ENCODE measurements at regions of chr12 and their contacts with region 1.

Region 1: DNA sequence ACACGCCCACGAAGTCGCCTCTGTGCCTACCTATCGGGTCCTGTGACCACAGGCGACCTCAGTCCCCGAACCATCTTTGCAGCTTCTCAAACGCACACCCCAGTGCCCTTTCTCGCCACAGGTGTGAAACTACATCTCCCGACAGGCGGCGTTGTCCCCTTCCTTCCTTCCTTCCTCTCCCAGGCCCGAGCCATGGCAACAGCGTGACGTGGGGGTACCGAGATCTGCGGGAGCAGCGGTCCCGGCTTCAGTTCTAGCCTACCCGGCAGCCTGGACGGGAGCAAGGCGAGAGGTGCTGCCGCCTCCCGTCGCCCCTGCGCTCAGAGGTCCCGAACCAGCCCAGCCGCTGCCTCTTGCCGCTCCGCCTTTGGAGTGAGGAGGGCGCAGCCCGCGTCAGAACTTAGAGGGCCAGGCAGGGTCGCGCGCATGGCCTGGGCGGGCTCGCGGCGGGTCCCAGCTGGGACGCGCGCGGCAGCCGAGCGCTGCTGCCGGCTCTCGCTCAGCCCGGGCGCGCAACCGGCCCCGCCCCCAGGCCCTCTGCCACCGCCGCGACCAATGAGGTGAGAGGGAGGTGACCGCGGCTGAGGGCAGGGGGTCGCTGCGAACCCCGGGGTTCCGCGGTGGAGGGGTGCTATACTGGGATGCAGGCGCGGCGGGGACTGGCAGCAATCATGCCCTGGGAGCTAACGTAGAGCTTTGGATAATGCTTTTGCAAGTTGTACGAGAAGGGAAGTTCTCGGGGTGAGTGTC is at the start of gene COQ10A:
- DNase-seq: peak; percentile 79
- H3K4me3 ChIP-seq: peak within 1 kb of the TSS; percentile 43 to 95 (median 74)
- H3K27ac ChIP-seq: peak within 1 kb of the TSS; percentile 38
- H3K4me1 ChIP-seq: peaks cover 17% of the 10 kb centered on the region
- H3K27me3 ChIP-seq: no peaks in the 10 kb centered on the region
- CTCF ChIP-seq: peak; percentile 54 to 81
- total RNA-seq, gene COQ10A: 3.7 to 4.2 TPM

Region 2: GRCh38 chr12:56143870-56144269 is 123.0 kb before region 1 on chr12:
- CTCF ChIA-PET with region 1: no interaction called
- dilution Hi-C with region 1: no loop called
- in situ Hi-C with region 1: no loop called
- intact Hi-C with region 1: no loop called
- DNase-seq: no peak
- H3K4me3 ChIP-seq: no peak overlapping the region
- H3K27ac ChIP-seq: no peak overlapping the region
- H3K4me1 ChIP-seq: peaks cover 9% of the 10 kb centered on the region
- H3K27me3 ChIP-seq: no peaks in the 10 kb centered on the region
- CTCF ChIP-seq: no peak

Region 3: GRCh38 chr12:56172831-56173230 is 94.0 kb before region 1 on chr12:
- CTCF ChIA-PET with region 1: no interaction called
- dilution Hi-C with region 1: no loop called
- in situ Hi-C with region 1: no loop called
- intact Hi-C with region 1: no loop called
- DNase-seq: no peak
- H3K4me3 ChIP-seq: no peak overlapping the region
- H3K27ac ChIP-seq: no peak overlapping the region
- H3K4me1 ChIP-seq: no peaks in the 10 kb centered on the region
- H3K27me3 ChIP-seq: no peaks in the 10 kb centered on the region
- CTCF ChIP-seq: no peak

Region 4: DNA sequence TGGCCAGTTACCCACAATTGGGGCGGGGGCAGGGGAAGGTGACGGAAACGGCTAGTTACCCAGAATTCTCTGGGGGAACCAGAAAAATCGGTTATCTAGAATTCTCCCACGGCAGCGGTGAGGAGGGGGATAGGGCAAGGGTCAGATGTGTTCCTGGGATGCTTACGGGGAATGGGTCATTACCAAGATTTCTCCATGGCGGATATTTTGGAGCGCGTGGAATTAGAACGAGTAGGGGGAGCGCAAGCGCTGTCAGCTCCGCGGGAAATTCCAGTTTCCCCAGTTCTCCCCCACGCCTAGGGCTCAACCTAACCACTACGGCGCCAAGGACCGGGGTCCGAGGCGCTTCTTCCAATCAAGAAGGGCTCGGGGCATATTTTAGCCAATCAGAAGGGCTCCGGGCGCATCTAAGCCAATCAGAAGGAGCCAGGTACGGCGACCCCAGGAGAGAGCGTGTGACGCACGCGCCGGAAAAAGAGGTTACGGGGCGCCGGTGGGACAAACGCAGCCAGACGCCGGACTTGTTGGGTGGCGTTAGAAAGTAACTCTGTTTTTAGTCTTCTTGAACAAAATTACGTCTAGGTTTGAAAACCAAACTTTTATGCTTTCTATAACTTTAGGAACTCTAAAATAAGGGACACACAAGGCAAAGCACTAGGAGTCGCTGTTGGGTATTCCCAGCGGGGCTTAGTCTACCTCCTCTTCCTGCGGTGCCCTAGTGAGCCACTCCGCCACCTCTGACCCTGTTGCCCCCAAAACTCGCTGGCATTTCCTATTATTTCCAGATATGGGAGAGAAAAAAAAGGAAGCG is 67.0 kb after region 1 on chr12 and contains the start of gene PAN2:
- CTCF ChIA-PET with region 1: no interaction called
- dilution Hi-C with region 1: no loop called
- in situ Hi-C with region 1: no loop called
- intact Hi-C with region 1: loop called (anchors 2 kb)
- DNase-seq: peak; percentile 98
- H3K4me3 ChIP-seq: peak within 1 kb of the TSS; percentile 52 to 72 (median 61)
- H3K27ac ChIP-seq: peak within 1 kb of the TSS; percentile 98
- H3K4me1 ChIP-seq: peaks cover 20% of the 10 kb centered on the region
- H3K27me3 ChIP-seq: no peaks in the 10 kb centered on the region
- CTCF ChIP-seq: peak; percentile 57 to 79
- total RNA-seq, gene PAN2: 21.0 to 50.8 TPM

Region 5: GRCh38 chr12:56348776-56349175 is 81.9 kb after region 1 on chr12:
- CTCF ChIA-PET with region 1: no interaction called
- dilution Hi-C with region 1: no loop called
- in situ Hi-C with region 1: no loop called
- intact Hi-C with region 1: no loop called
- DNase-seq: no peak
- H3K4me3 ChIP-seq: no peak overlapping the region
- H3K27ac ChIP-seq: no peak overlapping the region
- H3K4me1 ChIP-seq: no peaks in the 10 kb centered on the region
- H3K27me3 ChIP-seq: no peaks in the 10 kb centered on the region
- CTCF ChIP-seq: no peak